ENCODE measurements at regions of chr11 and their contacts with region 1.

Region 1: DNA sequence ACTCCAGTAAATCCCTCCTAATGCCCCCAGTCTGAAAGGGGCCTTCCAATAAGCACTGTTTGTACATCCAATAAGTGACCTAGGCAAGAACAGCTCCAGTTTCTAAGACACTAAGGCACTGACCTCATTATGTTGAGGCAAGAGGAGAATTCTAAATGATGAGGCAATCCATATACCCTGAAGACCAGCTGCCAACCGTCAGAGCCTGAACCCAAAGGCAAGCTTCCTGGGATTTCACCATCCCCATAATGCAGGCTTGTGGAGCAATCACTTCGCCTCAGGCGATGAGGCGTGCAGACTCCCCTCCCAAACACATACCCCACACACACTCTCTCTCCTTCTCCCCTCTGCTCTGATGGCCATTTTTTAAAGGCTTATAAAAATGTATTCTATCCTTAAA is 49.5 kb downstream of the LGR4 start:
- DNase-seq: peak; percentile 87
- H3K4me3 Mint-ChIP-seq: no peak overlapping the region
- H3K27ac Mint-ChIP-seq: peak overlapping the region; percentile 68
- H3K4me1 Mint-ChIP-seq: peaks cover 51% of the 10 kb centered on the region
- H3K27me3 Mint-ChIP-seq: no peaks in the 10 kb centered on the region
- CTCF ChIP-seq: no peak

Region 2: GRCh38 chr11:27150098-27150497 is 273.0 kb before region 1 on chr11:
- CTCF ChIA-PET with region 1: no interaction called
- POLR2A ChIA-PET with region 1: no interaction called
- intact Hi-C with region 1: no loop called
- DNase-seq: no peak
- H3K4me3 Mint-ChIP-seq: no peak overlapping the region
- H3K27ac Mint-ChIP-seq: no peak overlapping the region
- H3K4me1 Mint-ChIP-seq: no peaks in the 10 kb centered on the region
- H3K27me3 Mint-ChIP-seq: no peaks in the 10 kb centered on the region
- CTCF ChIP-seq: no peak

Region 3: DNA sequence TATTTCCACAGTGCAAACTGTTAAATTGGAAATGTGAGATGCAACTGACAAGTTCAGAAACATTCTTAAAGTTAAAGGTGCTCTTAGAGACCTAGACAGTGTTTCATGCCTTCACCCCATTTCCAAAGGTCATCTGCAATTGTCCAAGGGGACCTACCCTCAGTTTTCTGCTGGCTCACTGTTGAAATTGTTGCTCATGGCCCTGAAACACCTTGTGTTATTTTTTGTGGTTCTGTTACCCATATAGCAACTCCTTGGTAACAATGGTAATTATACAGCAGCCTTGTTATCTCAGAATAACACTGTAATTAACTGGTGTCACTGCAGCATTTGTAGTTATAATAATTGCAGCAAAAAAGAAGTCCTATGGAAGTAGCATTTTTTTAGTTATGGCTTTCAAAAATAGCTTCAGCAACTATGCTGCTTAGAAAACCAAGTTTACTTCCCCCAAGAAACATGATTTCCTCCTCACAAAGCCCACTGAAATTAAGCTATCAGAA is 10.9 kb before region 1 on chr11:
- CTCF ChIA-PET with region 1: no interaction called
- POLR2A ChIA-PET with region 1: interaction called, 12 read pairs
- intact Hi-C with region 1: no loop called
- DNase-seq: no peak
- H3K4me3 Mint-ChIP-seq: no peak overlapping the region
- H3K27ac Mint-ChIP-seq: no peak overlapping the region
- H3K4me1 Mint-ChIP-seq: peaks cover 19% of the 10 kb centered on the region
- H3K27me3 Mint-ChIP-seq: no peaks in the 10 kb centered on the region
- CTCF ChIP-seq: no peak

Region 4: GRCh38 chr11:27443746-27444507 is 20.8 kb after region 1 on chr11:
- CTCF ChIA-PET with region 1: interaction called, 4 read pairs
- POLR2A ChIA-PET with region 1: interaction called, 26 read pairs
- intact Hi-C with region 1: no loop called
- DNase-seq: no peak
- H3K4me3 Mint-ChIP-seq: no peak overlapping the region
- H3K27ac Mint-ChIP-seq: no peak overlapping the region
- H3K4me1 Mint-ChIP-seq: peaks cover 14% of the 10 kb centered on the region
- H3K27me3 Mint-ChIP-seq: no peaks in the 10 kb centered on the region
- CTCF ChIP-seq: no peak

Region 5: GRCh38 chr11:27456140-27456794 is 33.1 kb after region 1 on chr11:
- CTCF ChIA-PET with region 1: interaction called, 3 read pairs
- POLR2A ChIA-PET with region 1: interaction called, 12 read pairs
- intact Hi-C with region 1: no loop called
- DNase-seq: peak; percentile 56
- H3K4me3 Mint-ChIP-seq: peak overlapping the region; percentile 34
- H3K27ac Mint-ChIP-seq: peak overlapping the region; percentile 75
- H3K4me1 Mint-ChIP-seq: peaks cover 42% of the 10 kb centered on the region
- H3K27me3 Mint-ChIP-seq: no peaks in the 10 kb centered on the region
- CTCF ChIP-seq: no peak

Region 6: GRCh38 chr11:27626269-27626937 is 203.3 kb after region 1 on chr11:
- CTCF ChIA-PET with region 1: no interaction called
- POLR2A ChIA-PET with region 1: no interaction called
- intact Hi-C with region 1: no loop called
- DNase-seq: no peak
- H3K4me3 Mint-ChIP-seq: no peak overlapping the region
- H3K27ac Mint-ChIP-seq: no peak overlapping the region
- H3K4me1 Mint-ChIP-seq: no peaks in the 10 kb centered on the region
- H3K27me3 Mint-ChIP-seq: no peaks in the 10 kb centered on the region
- CTCF ChIP-seq: no peak

Measured in MCF 10A (cell line).